Dendritic cell treated with granulocyte-macrophage colony-stimulating factor and Interleukin-4, amounts not matched to agents 40 ng/mL and 50 ng/mL, for 4 days (primary cell): ENCODE measurements at regions of chr1 and their contacts with region 1.

Region 1: GRCh38 chr1:113389953-113390834 is at the start of gene MAGI3:
- H3K4me3 Mint-ChIP-seq: peak within 1 kb of the TSS; percentile 94
- H3K27ac Mint-ChIP-seq: peak within 1 kb of the TSS; percentile 85
- H3K4me1 Mint-ChIP-seq: peaks cover 24% of the 10 kb centered on the region
- H3K27me3 Mint-ChIP-seq: peaks cover 52% of the 10 kb centered on the region

Region 2: GRCh38 chr1:113415310-113416070 is 25.3 kb after region 1 on chr1:
- intact Hi-C with region 1: loop called (anchors 2 kb)
- H3K4me3 Mint-ChIP-seq: no peak overlapping the region
- H3K27ac Mint-ChIP-seq: no peak overlapping the region
- H3K4me1 Mint-ChIP-seq: no peaks in the 10 kb centered on the region
- H3K27me3 Mint-ChIP-seq: peaks cover 1% of the 10 kb centered on the region